MCF 10A (cell line): ENCODE measurements at regions of chr2 and their contacts with region 1.

Region 1: DNA sequence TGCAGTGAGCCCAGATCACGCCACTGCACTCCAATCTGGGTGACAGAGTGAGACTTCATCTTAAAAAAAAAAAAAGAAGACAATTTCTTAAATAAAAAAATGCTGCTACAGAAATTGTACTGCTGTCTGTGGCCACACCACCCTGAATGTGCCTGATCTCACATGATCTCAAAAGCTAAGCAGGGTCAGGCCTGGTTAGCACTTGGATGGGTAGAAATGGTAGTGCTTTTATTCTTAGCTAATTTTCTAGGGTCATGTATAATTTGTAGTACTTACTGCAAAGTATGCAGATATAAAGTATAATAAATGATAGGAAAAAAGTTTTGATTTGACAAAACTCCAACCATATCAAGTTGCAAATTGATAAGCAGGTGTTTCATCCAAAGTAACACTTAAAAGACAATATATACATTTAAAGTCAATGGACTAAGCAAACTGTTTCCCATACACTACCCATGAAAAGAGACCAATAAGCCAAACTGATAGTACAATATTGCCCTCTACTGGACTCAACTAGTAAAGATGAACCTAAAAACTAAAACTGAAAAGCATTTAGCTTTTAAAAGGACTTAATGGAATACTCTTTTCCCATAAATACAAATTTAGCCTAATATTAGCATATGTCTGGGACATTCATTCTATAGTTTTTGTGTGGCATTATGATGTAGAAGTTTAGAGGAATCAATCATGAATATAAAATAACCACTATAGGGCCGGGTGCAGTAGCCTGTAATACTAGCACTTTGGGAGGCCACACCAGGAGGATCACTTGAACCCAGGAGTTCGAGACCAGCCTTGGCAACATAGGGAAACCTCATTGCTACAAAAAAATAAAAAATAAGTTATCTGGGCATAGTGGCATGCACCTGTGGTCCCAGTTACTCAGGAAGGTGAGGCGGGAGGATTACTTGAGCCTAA is 18.6 kb upstream of the PEX13 start:
- DNase-seq: peak; percentile 66
- H3K4me3 Mint-ChIP-seq: no peak overlapping the region
- H3K27ac Mint-ChIP-seq: no peak overlapping the region
- H3K4me1 Mint-ChIP-seq: no peaks in the 10 kb centered on the region
- H3K27me3 Mint-ChIP-seq: no peaks in the 10 kb centered on the region
- CTCF ChIP-seq: peak; percentile 61

Region 2: GRCh38 chr2:60707750-60708371 is 291.0 kb before region 1 on chr2:
- CTCF ChIA-PET with region 1: interaction called, 11 read pairs
- POLR2A ChIA-PET with region 1: no interaction called
- intact Hi-C with region 1: loop called (anchors 1 kb)
- DNase-seq: peak; percentile 65
- H3K4me3 Mint-ChIP-seq: no peak overlapping the region
- H3K27ac Mint-ChIP-seq: no peak overlapping the region
- H3K4me1 Mint-ChIP-seq: peaks cover 11% of the 10 kb centered on the region
- H3K27me3 Mint-ChIP-seq: no peaks in the 10 kb centered on the region
- CTCF ChIP-seq: peak; percentile 63

Region 3: GRCh38 chr2:60780721-60781120 is 218.2 kb before region 1 on chr2:
- CTCF ChIA-PET with region 1: interaction called, 11 read pairs
- POLR2A ChIA-PET with region 1: no interaction called
- intact Hi-C with region 1: no loop called
- DNase-seq: no peak
- H3K4me3 Mint-ChIP-seq: no peak overlapping the region
- H3K27ac Mint-ChIP-seq: peak overlapping the region; percentile 88
- H3K4me1 Mint-ChIP-seq: no peaks in the 10 kb centered on the region
- H3K27me3 Mint-ChIP-seq: no peaks in the 10 kb centered on the region
- CTCF ChIP-seq: no peak

Region 4: DNA sequence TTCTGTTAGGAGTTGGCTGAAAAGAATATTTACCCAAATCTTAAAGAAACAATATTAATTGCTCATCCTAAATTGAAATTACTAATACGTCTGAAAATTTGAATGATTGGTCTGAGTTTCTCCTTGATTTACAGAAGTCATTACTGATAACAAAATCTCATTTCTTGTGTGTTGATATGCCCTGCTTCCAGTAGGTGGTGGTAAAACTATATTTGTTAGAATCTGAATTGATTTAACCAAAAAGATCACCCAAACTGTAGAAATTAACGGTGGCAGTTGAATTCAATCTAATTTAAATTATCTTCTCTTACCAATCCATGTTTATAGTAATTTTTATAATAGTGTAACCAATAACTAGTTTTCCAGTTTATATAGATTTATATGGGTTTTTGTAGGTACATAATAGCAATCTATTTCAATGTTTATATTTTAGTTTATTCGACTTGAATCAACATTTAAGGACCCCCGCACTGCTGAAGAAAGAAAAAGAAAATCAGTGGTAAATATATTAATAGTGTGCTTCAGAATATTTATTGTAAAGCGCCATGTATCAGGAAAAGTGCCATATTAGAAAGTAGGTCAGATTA is 204.5 kb before region 1 on chr2:
- CTCF ChIA-PET with region 1: interaction called, 24 read pairs
- POLR2A ChIA-PET with region 1: interaction called, 3 read pairs
- intact Hi-C with region 1: loop called (anchors 1 kb)
- DNase-seq: peak; percentile 27
- H3K4me3 Mint-ChIP-seq: no peak overlapping the region
- H3K27ac Mint-ChIP-seq: no peak overlapping the region
- H3K4me1 Mint-ChIP-seq: no peaks in the 10 kb centered on the region
- H3K27me3 Mint-ChIP-seq: no peaks in the 10 kb centered on the region
- CTCF ChIP-seq: peak; percentile 45

Region 5: DNA sequence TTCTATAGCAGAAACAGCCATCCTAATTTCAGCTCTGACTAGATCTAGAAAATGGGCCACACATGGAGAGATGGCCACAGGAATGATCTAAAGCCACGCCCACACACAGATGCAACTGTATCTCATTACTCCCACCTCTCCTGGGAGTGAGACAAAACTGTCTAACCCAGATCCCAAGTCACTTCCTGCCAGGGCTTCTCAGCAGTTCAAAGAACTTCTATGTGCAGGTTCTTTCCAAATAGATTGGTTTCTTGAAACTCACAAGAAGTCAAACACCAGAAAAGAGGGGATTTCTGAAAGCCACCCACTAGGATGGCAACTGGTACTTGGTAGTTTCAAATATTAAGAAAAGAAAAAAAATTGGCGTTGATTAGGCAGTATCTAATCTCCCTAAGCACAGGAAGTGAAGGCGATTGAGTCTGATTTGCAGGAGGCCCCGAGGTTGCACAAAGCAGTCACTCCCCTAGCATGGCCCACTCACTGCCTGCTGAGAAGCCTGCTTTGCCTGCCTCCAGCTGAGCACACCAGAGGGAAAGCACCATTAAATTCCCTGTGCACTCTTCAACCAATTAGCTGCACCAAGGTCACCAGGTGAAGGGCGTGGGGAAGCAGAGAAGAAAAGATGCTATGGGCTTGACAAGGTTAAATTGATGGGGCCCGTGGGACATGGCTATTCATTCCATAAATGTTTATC is 191.8 kb before region 1 on chr2:
- CTCF ChIA-PET with region 1: interaction called, 14 read pairs
- POLR2A ChIA-PET with region 1: no interaction called
- intact Hi-C with region 1: no loop called
- DNase-seq: peak; percentile 13
- H3K4me3 Mint-ChIP-seq: no peak overlapping the region
- H3K27ac Mint-ChIP-seq: no peak overlapping the region
- H3K4me1 Mint-ChIP-seq: no peaks in the 10 kb centered on the region
- H3K27me3 Mint-ChIP-seq: no peaks in the 10 kb centered on the region
- CTCF ChIP-seq: no peak

Region 6: GRCh38 chr2:60840880-60841279 is 158.0 kb before region 1 on chr2:
- CTCF ChIA-PET with region 1: no interaction called
- POLR2A ChIA-PET with region 1: no interaction called
- intact Hi-C with region 1: no loop called
- DNase-seq: no peak
- H3K4me3 Mint-ChIP-seq: no peak overlapping the region
- H3K27ac Mint-ChIP-seq: no peak overlapping the region
- H3K4me1 Mint-ChIP-seq: no peaks in the 10 kb centered on the region
- H3K27me3 Mint-ChIP-seq: no peaks in the 10 kb centered on the region
- CTCF ChIP-seq: no peak

Region 7: DNA sequence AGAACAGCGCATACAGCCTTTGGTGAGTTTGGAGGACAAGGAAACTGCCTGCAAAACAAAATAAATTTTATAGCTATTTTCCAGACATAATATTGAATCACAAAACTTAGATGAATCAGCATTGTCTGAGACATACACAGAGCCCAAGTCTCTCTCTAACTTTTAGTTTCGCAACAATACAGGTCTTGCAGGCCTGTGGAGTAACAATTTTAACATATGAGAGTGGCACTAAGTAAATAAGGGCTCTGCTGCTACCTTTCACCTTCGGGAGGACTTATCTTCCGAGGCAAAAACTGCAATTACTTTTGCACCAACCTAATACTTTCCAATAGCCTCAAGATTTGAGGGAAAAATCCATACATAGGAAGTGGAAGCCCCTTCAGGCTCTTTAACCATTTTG is 37.4 kb before region 1 on chr2:
- CTCF ChIA-PET with region 1: interaction called, 4 read pairs
- POLR2A ChIA-PET with region 1: interaction called, 13 read pairs
- intact Hi-C with region 1: no loop called
- DNase-seq: peak; percentile 84
- H3K4me3 Mint-ChIP-seq: no peak overlapping the region
- H3K27ac Mint-ChIP-seq: peak overlapping the region; percentile 71
- H3K4me1 Mint-ChIP-seq: peaks cover 21% of the 10 kb centered on the region
- H3K27me3 Mint-ChIP-seq: no peaks in the 10 kb centered on the region
- CTCF ChIP-seq: no peak

Region 8: GRCh38 chr2:61792355-61792890 is 793.5 kb after region 1 on chr2:
- CTCF ChIA-PET with region 1: no interaction called
- POLR2A ChIA-PET with region 1: no interaction called
- intact Hi-C with region 1: no loop called
- DNase-seq: no peak
- H3K4me3 Mint-ChIP-seq: no peak overlapping the region
- H3K27ac Mint-ChIP-seq: no peak overlapping the region
- H3K4me1 Mint-ChIP-seq: peaks cover 5% of the 10 kb centered on the region
- H3K27me3 Mint-ChIP-seq: no peaks in the 10 kb centered on the region
- CTCF ChIP-seq: no peak